Activated T-helper 1 cell treated with anti-CD3 and anti-CD28 coated beads, Interleukin-12 subunit alpha, Interleukin-12 subunit beta, Interleukin-2, Interleukin-4 antibody, amounts not matched to agents 30 ng/mL and 10 ng/mL and 1 ng/mL, durations not matched to agents 14 hours and 24 hours and 36 hours (primary cell): ENCODE measurements at regions of chr10 and their contacts with region 1.

Region 1: DNA sequence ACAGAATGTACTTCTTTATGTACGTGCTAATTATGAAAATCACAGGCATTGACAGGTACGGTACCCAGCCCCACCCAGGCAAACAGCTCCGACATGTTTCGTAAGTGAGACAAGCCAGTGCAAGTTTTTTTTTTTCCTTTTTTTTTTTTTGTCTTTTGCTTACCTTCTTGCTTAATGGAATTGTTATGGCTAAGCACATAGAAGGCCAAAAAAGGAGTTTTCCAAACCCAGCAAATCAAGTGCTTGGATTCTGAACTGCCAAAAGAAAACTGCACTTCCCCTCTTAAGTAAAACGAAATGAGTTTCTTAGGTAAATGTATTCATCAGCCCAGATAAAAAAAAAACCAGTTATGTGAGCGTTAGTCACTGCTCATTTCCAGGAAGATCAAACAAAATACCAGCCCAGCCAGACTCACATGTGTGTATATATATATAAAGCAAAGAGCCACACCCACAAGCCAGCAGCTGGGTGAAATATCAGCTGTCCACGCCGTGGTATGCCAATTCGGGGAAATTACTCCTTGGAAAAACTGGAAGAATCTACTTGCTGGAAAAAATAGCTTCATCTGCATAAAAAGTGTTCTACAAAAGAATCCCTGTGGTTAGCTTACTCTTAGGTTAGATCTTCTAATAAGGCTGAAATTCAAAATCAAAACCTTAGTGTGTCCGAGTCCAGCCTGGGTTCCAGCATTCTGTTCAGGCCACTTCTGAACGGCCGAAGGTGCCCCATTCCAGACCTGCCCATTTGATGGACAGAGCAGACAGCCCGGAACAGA is 8.0 kb downstream of the KLF6 start:
- DNase-seq: peak; percentile 60
- H3K4me3 Mint-ChIP-seq: peak overlapping the region; percentile 37
- H3K27ac Mint-ChIP-seq: peak overlapping the region; percentile 53
- H3K4me1 Mint-ChIP-seq: peaks cover 81% of the 10 kb centered on the region
- H3K27me3 Mint-ChIP-seq: no peaks in the 10 kb centered on the region

Region 2: GRCh38 chr10:3197348-3198003 is 579.5 kb before region 1 on chr10:
- intact Hi-C with region 1: loop called (anchors 1 kb)
- DNase-seq: peak; percentile 76
- H3K4me3 Mint-ChIP-seq: peak overlapping the region; percentile 37
- H3K27ac Mint-ChIP-seq: peak overlapping the region; percentile 57
- H3K4me1 Mint-ChIP-seq: peaks cover 24% of the 10 kb centered on the region
- H3K27me3 Mint-ChIP-seq: peaks cover 82% of the 10 kb centered on the region

Region 3: DNA sequence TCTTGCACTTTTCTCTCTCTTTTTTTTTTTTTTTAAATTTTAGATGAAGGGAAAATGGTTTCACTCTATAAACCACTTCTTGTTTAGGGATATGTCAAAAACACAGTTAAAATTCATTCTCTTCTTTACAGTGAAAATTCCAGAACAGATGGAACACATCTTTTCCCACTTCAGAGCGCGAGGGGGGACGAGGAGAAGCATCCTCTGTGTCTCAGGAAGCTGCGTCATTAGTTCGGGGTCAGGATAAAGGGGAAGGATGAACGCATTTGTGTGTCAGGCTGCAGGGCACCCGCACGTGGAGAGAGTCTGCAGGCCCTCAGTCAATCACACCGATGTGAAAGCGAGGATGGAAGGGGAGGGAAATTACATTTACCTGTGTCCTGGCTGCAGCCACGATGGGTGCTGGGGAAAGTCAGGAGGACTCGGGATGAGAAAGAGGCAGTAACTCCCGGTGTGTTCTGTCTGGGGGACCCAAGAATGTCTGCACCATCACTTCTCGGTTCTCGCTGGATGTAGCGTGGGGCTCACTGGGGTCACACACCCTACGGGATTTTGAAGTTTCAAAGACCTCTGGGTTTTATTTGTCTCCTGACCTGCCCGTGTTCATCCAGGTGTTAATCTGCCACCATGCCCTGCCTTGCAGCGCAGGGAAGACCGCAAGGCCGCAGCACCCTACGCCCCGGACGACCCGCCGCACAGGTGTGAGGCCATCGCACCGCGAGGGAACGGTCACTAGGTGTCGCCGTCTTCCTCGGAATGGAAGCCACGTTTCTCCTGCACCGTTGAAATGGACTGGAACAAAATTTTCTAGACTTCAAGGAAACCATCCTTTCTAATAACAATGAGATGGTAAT is 537.7 kb before region 1 on chr10:
- intact Hi-C with region 1: loop called (anchors 1 kb)
- DNase-seq: peak; percentile 54
- H3K4me3 Mint-ChIP-seq: no peak overlapping the region
- H3K27ac Mint-ChIP-seq: no peak overlapping the region
- H3K4me1 Mint-ChIP-seq: no peaks in the 10 kb centered on the region
- H3K27me3 Mint-ChIP-seq: peaks cover 48% of the 10 kb centered on the region

Region 4: DNA sequence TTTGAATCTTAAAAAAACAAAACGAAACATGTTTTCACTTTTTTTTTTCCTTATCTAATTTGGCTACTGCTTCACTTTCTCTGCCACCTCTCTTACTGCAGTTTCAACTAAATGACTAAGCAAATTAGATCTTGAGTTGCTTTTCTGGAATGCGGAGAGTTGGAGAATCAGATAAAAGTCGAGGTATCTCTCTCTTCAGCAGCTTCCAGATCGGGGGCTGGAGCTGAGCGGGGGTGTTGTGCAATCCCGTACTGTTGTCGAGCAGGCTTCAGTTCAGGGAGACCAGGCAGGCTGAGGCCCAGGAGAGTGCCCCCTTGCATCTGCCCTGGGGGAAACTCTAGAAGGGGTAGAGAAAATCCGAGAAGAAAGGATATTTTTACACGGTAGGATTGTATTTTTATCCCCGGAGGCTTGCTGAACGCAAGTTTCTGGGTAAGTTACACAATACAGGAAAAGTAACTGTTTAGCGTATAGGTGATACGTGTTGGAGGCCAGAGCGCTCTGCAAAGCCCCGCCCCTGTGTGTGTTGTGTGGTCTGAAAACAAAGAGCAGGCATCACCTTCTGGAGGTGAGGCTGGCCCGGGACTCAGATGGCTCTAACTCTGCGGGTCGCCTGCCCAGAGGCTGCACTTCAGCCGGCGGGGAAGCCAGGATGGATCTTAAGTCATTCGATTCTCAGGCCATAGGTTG is 108.6 kb before region 1 on chr10:
- intact Hi-C with region 1: loop called (anchors 1 kb)
- DNase-seq: peak; percentile 55
- H3K4me3 Mint-ChIP-seq: peak overlapping the region; percentile 82
- H3K27ac Mint-ChIP-seq: peak overlapping the region; percentile 89
- H3K4me1 Mint-ChIP-seq: peaks cover 44% of the 10 kb centered on the region
- H3K27me3 Mint-ChIP-seq: peaks cover 3% of the 10 kb centered on the region

Region 5: GRCh38 chr10:3729397-3729976 is 47.5 kb before region 1 on chr10:
- intact Hi-C with region 1: no loop called
- DNase-seq: no peak
- H3K4me3 Mint-ChIP-seq: no peak overlapping the region
- H3K27ac Mint-ChIP-seq: no peak overlapping the region
- H3K4me1 Mint-ChIP-seq: peaks cover 6% of the 10 kb centered on the region
- H3K27me3 Mint-ChIP-seq: peaks cover 15% of the 10 kb centered on the region

Region 6: GRCh38 chr10:3740157-3740871 is 36.7 kb before region 1 on chr10:
- intact Hi-C with region 1: loop called (anchors 1 kb)
- DNase-seq: no peak
- H3K4me3 Mint-ChIP-seq: no peak overlapping the region
- H3K27ac Mint-ChIP-seq: peak overlapping the region; percentile 7
- H3K4me1 Mint-ChIP-seq: peaks cover 30% of the 10 kb centered on the region
- H3K27me3 Mint-ChIP-seq: no peaks in the 10 kb centered on the region

Region 7: GRCh38 chr10:3942937-3943489 is 166.0 kb after region 1 on chr10:
- intact Hi-C with region 1: no loop called
- DNase-seq: no peak
- H3K4me3 Mint-ChIP-seq: no peak overlapping the region
- H3K27ac Mint-ChIP-seq: peak overlapping the region; percentile 30
- H3K4me1 Mint-ChIP-seq: peaks cover 48% of the 10 kb centered on the region
- H3K27me3 Mint-ChIP-seq: no peaks in the 10 kb centered on the region